ENCODE measurements at regions of chr14 and their contacts with region 1.

Region 1: GRCh38 chr14:89792489-89793366 is 161.8 kb downstream of the EFCAB11 start:
- DNase-seq: no peak
- H3K4me3 ChIP-seq: no peak overlapping the region
- H3K27ac ChIP-seq: no peak overlapping the region
- H3K4me1 ChIP-seq: no peaks in the 10 kb centered on the region
- H3K27me3 ChIP-seq: no peaks in the 10 kb centered on the region
- CTCF ChIP-seq: no peak

Region 2: GRCh38 chr14:88195676-88196075 is 1597.1 kb before region 1 on chr14:
- CTCF ChIA-PET with region 1: interaction called, 11 read pairs
- POLR2A ChIA-PET with region 1: no interaction called
- intact Hi-C with region 1: no loop called
- DNase-seq: no peak
- H3K4me3 ChIP-seq: no peak overlapping the region
- H3K27ac ChIP-seq: no peak overlapping the region
- H3K4me1 ChIP-seq: no peaks in the 10 kb centered on the region
- H3K27me3 ChIP-seq: peaks cover 37% of the 10 kb centered on the region
- CTCF ChIP-seq: no peak

Measured in A673 (cell line).